Breast epithelium (tissue), 4 donors: ENCODE measurements at regions of chr12 and their contacts with region 1.

Region 1: DNA sequence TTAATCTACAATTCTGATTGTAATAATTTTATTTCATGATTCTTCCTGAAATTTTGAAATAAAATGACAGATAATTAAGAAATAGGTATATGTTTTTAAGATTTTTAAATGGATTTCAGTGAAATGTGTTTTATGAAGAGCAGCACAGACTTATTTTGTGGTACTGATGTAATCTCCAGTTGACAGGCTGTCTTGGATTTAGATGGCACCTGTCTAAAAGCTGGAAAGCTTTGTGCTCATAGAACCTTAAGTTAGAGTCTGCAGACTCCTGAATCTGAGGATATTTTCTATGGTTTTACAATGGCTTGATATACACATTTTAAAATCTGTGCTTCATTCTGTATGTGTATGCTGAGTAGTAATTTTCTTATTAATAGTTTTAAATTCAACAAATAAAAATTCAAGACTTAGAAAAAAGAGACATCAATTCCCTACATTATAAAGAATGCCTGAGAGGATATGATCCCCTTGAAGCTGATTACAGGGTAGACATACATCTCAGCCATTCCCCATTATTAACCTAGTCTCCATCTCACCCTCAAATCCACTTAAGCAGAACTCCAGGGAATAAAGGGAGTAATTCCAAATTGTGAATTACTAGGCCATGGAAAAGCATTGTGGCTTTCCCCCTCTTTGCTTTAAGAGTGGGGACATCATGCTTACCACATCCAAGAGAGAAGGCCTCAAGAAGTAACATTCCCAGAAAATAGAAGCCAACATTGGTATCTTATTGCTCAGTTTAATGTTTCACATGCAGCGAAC is 33.7 kb upstream of the ACSS3 start:
- DNase-seq: no peak
- H3K4me3 ChIP-seq: no peak overlapping the region
- H3K27ac ChIP-seq: no peak overlapping the region
- H3K4me1 ChIP-seq: no peaks in the 10 kb centered on the region
- H3K27me3 ChIP-seq: no peaks in the 10 kb centered on the region
- CTCF ChIP-seq: no peak
- POLR2A ChIP-seq: no peak

Region 2: GRCh38 chr12:81000831-81001230 is 43.3 kb before region 1 on chr12:
- intact Hi-C with region 1: loop called (anchors 2 kb)
- DNase-seq: no peak
- H3K4me3 ChIP-seq: no peak overlapping the region
- H3K27ac ChIP-seq: no peak overlapping the region
- H3K4me1 ChIP-seq: no peaks in the 10 kb centered on the region
- H3K27me3 ChIP-seq: no peaks in the 10 kb centered on the region
- CTCF ChIP-seq: no peak
- POLR2A ChIP-seq: no peak